Activated naive CD8-positive, alpha-beta T cell treated with anti-CD3 and anti-CD28 coated beads, Interleukin-2, amount 10 ng/mL, durations not matched to agents 7 days and 5 days (primary cell): ENCODE measurements at regions of chr14 and their contacts with region 1.

Region 1: DNA sequence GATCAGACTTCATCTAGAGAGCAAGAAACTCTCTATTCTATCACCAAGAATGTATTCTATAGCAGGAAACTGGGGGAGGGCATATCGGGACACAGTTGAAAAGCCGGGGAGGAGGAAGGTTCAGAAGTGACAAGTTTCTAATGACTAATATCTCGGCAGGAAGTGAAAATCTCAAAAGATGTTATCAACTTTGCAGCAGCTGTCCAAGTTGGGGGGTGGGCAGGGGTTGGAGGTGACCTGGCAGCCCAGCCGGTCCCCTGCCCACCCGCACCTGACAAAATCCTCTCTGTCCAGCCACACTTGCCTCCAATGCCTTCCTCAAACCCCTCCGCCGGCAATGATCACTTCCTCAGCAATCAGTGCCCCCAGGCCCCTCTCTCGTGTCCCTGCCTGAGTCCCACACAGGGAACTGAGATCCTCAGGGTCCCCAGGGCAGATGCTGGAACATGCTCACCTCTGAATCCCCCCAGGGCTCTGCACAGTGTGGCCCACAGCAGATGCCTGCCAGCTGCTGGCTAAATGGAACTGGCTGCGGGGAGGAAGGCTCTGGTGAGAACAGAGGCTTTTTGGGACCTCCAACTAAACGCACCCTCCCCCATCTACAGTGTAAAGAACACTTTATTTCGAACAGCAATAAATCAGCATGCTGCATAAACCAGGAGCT is 43.9 kb downstream of the CCDC88C start:
- DNase-seq: no peak
- ATAC-seq: peak; percentile 49
- H3K4me3 Mint-ChIP-seq: peak overlapping the region; percentile 80
- H3K27ac Mint-ChIP-seq: peak overlapping the region; percentile 90
- H3K4me1 Mint-ChIP-seq: peaks cover 85% of the 10 kb centered on the region
- H3K27me3 Mint-ChIP-seq: no peaks in the 10 kb centered on the region

Region 2: GRCh38 chr14:91317381-91318308 is 56.1 kb before region 1 on chr14:
- POLR2A ChIA-PET with region 1: interaction called, 16 read pairs
- DNase-seq: peak; percentile 80
- ATAC-seq: peak; percentile 65
- H3K4me3 Mint-ChIP-seq: peak overlapping the region; percentile 77
- H3K27ac Mint-ChIP-seq: peak overlapping the region; percentile 95
- H3K4me1 Mint-ChIP-seq: peaks cover 52% of the 10 kb centered on the region
- H3K27me3 Mint-ChIP-seq: no peaks in the 10 kb centered on the region

Region 3: DNA sequence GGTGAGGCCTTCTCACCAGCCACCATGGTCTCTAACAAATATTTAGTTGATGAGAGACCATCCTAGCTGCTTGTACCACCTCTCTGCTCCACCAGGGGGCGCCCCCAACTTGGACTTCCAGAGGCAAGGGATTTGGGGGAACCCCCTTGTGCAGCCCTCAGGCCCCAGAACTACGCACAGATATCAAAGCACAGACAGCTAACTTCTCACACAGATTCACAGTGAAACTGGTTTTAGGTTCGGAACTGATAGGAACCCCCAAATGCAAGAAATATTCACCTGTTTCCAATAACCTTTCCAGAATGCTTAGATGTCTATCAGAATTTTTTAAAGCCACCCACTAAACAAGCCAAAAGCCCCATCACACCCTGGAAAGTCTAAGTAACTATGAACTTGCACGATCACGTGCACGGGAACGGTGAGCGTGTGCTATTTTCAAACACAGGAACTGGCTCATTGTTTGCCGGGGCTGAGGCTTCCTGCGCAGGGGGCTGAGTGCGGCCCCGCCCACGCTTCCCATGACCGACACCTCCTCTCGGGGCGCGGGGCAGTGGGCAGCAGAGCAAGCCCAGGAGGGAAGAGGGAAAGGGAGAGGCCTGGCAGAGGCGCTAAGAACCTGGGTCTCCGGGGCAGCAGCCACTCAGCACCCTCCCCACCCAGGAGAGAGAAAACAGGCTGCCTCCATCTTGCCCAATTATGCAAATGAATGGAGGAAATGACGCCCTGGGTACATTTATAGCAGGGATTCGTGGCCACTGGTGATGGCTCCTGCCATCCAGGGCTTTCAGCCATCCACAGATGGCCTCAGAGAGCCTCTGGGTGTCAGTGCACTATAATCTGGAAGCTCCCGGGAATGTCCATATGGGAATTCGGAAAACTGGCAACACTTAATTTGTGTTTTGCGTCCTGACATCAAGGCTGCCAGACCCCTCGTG is 49.8 kb before region 1 on chr14:
- POLR2A ChIA-PET with region 1: interaction called, 16 read pairs
- DNase-seq: peak; percentile 93
- ATAC-seq: peak; percentile 81
- H3K4me3 Mint-ChIP-seq: peak overlapping the region; percentile 79
- H3K27ac Mint-ChIP-seq: peak overlapping the region; percentile 95
- H3K4me1 Mint-ChIP-seq: peaks cover 55% of the 10 kb centered on the region
- H3K27me3 Mint-ChIP-seq: no peaks in the 10 kb centered on the region

Region 4: GRCh38 chr14:91350813-91351511 is 22.8 kb before region 1 on chr14:
- POLR2A ChIA-PET with region 1: interaction called, 36 read pairs
- DNase-seq: peak; percentile 67
- ATAC-seq: peak; percentile 78
- H3K4me3 Mint-ChIP-seq: peak overlapping the region; percentile 85
- H3K27ac Mint-ChIP-seq: peak overlapping the region; percentile 96
- H3K4me1 Mint-ChIP-seq: peaks cover 78% of the 10 kb centered on the region
- H3K27me3 Mint-ChIP-seq: no peaks in the 10 kb centered on the region

Region 5: GRCh38 chr14:91396959-91397815 is 23.5 kb after region 1 on chr14:
- POLR2A ChIA-PET with region 1: interaction called, 42 read pairs
- DNase-seq: peak; percentile 75
- ATAC-seq: peak; percentile 81
- H3K4me3 Mint-ChIP-seq: peak overlapping the region; percentile 86
- H3K27ac Mint-ChIP-seq: peak overlapping the region; percentile 91
- H3K4me1 Mint-ChIP-seq: peaks cover 73% of the 10 kb centered on the region
- H3K27me3 Mint-ChIP-seq: no peaks in the 10 kb centered on the region